Endothelial cell of umbilical vein (primary cell): ENCODE measurements at regions of chr6 and their contacts with region 1.

Region 1: GRCh38 chr6:56699066-56699654 is 56.5 kb upstream of the DST start:
- DNase-seq: peak; percentile 63
- H3K4me3 ChIP-seq: no peak overlapping the region
- H3K27ac ChIP-seq: no peak overlapping the region
- H3K4me1 ChIP-seq: peaks cover 16% of the 10 kb centered on the region
- H3K27me3 ChIP-seq: no peaks in the 10 kb centered on the region
- CTCF ChIP-seq: peak; percentile 13 to 25
- POLR2A ChIP-seq: no peak

Region 2: DNA sequence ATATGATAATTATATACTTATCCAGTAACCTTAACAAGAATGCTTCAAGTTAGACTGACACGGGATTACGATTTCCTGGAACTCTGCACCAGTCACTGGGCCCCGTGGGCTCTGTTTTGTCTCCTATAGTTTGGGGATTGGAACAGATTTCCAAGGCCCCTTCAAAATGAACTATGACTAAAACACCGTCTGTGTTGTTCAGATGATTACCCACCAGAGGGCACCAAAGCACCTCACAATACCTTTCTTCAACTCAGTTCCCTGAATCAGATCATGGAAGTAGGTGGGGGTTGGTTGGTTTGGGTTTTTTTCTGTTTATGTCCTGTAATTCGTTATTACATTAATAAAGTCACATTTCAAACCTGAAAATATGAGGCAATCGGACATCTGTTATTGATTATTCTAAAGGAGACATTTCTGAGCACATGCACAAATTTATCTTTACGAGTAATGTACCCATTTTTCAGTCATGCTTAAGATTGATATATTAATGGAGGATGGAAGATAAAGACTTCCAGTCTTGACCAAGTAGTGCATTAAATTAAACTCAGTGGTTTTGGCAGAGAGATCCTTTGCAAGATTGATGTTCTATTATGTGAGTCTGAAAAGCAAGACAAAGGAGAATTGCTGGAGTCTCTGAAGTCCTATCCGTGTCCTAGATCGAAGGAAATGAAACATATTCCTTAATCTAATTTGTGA is 339.8 kb before region 1 on chr6:
- CTCF ChIA-PET with region 1: interaction called, 4 read pairs
- POLR2A ChIA-PET with region 1: no interaction called
- dilution Hi-C with region 1: no loop called
- intact Hi-C with region 1: loop called (anchors 2 kb)
- DNase-seq: peak; percentile 83
- H3K4me3 ChIP-seq: no peak overlapping the region
- H3K27ac ChIP-seq: no peak overlapping the region
- H3K4me1 ChIP-seq: peaks cover 47% of the 10 kb centered on the region
- H3K27me3 ChIP-seq: no peaks in the 10 kb centered on the region
- CTCF ChIP-seq: peak; percentile 55 to 59
- POLR2A ChIP-seq: no peak

Region 3: GRCh38 chr6:56637640-56638039 is 61.5 kb before region 1 on chr6:
- CTCF ChIA-PET with region 1: interaction called, 187 read pairs
- POLR2A ChIA-PET with region 1: no interaction called
- dilution Hi-C with region 1: no loop called
- intact Hi-C with region 1: loop called (anchors 1 kb)
- DNase-seq: peak; percentile 83
- H3K4me3 ChIP-seq: no peak overlapping the region
- H3K27ac ChIP-seq: no peak overlapping the region
- H3K4me1 ChIP-seq: peaks cover 4% of the 10 kb centered on the region
- H3K27me3 ChIP-seq: no peaks in the 10 kb centered on the region
- CTCF ChIP-seq: peak; percentile 41 to 42
- POLR2A ChIP-seq: no peak

Region 4: DNA sequence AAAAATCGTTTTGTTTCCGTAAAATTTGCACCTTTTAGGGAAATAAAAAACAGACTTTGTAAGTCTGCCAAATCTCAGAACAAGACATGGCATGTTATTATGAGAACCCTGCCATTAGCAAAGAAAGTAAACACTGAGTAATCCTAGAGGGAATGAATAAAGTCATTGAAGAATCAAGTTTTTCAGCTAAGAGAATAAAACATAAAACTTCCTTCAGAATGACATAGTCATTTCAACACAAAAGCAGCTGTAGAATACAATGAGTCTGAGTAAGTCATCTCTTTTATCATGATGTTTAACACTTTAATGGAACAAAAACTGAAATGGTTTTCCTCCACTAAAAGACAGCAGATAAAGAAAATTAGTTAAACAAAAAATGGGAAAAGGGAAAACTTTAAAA is 46.2 kb before region 1 on chr6:
- CTCF ChIA-PET with region 1: interaction called, 24 read pairs
- POLR2A ChIA-PET with region 1: no interaction called
- dilution Hi-C with region 1: no loop called
- intact Hi-C with region 1: loop called (anchors 5 kb)
- DNase-seq: peak; percentile 86
- H3K4me3 ChIP-seq: no peak overlapping the region
- H3K27ac ChIP-seq: peak overlapping the region; percentile 66
- H3K4me1 ChIP-seq: peaks cover 46% of the 10 kb centered on the region
- H3K27me3 ChIP-seq: no peaks in the 10 kb centered on the region
- CTCF ChIP-seq: no peak
- POLR2A ChIP-seq: no peak

Region 5: DNA sequence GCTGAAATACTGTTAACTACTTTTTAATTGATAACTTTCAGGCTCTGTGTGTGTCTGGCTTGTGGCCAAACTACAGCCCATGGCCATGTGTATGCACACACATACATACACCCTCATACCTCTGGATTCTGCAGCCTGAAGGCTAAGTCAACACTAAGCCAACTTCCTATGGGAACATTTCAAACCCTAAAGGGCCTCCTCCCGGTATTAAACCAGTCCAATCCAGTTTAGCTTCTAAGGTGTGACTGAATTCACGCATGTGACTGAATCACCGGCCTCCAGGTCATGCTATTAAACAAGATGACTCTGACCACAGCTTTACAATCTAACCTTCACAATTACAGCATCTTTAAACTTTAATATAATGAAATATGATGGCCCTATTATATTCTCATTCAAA is 35.8 kb before region 1 on chr6:
- CTCF ChIA-PET with region 1: interaction called, 15 read pairs
- POLR2A ChIA-PET with region 1: no interaction called
- dilution Hi-C with region 1: no loop called
- intact Hi-C with region 1: no loop called
- DNase-seq: no peak
- H3K4me3 ChIP-seq: no peak overlapping the region
- H3K27ac ChIP-seq: no peak overlapping the region
- H3K4me1 ChIP-seq: no peaks in the 10 kb centered on the region
- H3K27me3 ChIP-seq: no peaks in the 10 kb centered on the region
- CTCF ChIP-seq: no peak
- POLR2A ChIP-seq: no peak

Region 6: GRCh38 chr6:56757588-56757984 is 58.4 kb after region 1 on chr6:
- CTCF ChIA-PET with region 1: interaction called, 27 read pairs
- POLR2A ChIA-PET with region 1: no interaction called
- dilution Hi-C with region 1: no loop called
- intact Hi-C with region 1: no loop called
- DNase-seq: peak; percentile 76
- H3K4me3 ChIP-seq: no peak overlapping the region
- H3K27ac ChIP-seq: no peak overlapping the region
- H3K4me1 ChIP-seq: no peaks in the 10 kb centered on the region
- H3K27me3 ChIP-seq: no peaks in the 10 kb centered on the region
- CTCF ChIP-seq: peak; percentile 36 to 45
- POLR2A ChIP-seq: no peak